CD8-positive, alpha-beta T cell (primary cell): ENCODE measurements at regions of chr11 and their contacts with region 1.

Region 1: DNA sequence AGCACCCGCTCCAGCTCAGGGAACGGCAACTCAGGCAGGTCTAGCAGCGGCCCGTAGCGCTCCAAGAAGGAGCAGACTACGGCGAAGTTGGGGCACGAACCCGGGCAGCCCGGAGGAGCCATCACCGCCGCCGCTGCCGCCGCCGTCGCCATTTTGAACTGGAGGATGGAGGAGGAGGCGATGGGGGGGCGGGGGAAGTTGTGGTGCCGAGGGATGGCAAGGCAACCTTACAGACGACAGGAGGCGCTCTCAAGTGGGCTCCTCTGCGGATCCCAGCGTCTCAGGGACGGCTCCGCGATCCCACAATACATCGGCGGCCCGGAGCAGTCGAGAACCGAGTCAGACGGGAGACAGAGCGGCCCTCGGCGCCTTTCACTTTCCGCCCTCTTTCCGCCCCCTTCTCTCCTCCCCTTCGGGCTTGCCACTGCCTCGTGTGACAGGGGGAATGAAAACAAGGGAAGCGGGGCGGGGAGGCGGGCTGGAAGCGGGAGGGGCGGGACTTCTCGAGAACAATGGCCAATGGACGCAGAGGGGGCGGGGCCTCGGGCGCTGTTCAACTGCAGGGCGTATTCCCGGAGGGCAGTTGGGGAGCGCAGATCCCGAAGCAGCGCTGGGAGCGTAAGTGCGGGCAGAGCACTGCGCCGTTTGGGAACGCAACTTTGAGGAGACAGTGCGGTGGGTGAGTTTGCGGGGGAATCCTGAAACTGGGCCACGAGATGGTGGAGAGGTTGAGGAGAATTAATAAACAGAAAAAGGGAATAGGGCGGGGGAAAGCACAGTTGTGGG is at the starts of genes AAMDC and RSF1:
- DNase-seq: peak; percentile 92 to 99 (median 97)
- ATAC-seq: peak; percentile 79
- H3K4me3 ChIP-seq: peak within 1 kb of the TSS; percentile 79 to 95
- H3K4me3 Mint-ChIP-seq: peak within 1 kb of the TSS; percentile 100
- H3K27ac ChIP-seq: peak within 1 kb of the TSS; percentile 83 to 91
- H3K27ac Mint-ChIP-seq: peak within 1 kb of the TSS; percentile 99
- H3K4me1 ChIP-seq: peaks cover 35% of the 10 kb centered on the region
- H3K4me1 Mint-ChIP-seq: peaks cover 38% of the 10 kb centered on the region
- H3K27me3 ChIP-seq: no peaks in the 10 kb centered on the region
- H3K27me3 Mint-ChIP-seq: no peaks in the 10 kb centered on the region
- CTCF ChIP-seq: peak; percentile 53
- total RNA-seq, gene AAMDC: 1.4 to 2.0 TPM
- total RNA-seq, gene RSF1: 96.7 to 103 TPM

Region 2: DNA sequence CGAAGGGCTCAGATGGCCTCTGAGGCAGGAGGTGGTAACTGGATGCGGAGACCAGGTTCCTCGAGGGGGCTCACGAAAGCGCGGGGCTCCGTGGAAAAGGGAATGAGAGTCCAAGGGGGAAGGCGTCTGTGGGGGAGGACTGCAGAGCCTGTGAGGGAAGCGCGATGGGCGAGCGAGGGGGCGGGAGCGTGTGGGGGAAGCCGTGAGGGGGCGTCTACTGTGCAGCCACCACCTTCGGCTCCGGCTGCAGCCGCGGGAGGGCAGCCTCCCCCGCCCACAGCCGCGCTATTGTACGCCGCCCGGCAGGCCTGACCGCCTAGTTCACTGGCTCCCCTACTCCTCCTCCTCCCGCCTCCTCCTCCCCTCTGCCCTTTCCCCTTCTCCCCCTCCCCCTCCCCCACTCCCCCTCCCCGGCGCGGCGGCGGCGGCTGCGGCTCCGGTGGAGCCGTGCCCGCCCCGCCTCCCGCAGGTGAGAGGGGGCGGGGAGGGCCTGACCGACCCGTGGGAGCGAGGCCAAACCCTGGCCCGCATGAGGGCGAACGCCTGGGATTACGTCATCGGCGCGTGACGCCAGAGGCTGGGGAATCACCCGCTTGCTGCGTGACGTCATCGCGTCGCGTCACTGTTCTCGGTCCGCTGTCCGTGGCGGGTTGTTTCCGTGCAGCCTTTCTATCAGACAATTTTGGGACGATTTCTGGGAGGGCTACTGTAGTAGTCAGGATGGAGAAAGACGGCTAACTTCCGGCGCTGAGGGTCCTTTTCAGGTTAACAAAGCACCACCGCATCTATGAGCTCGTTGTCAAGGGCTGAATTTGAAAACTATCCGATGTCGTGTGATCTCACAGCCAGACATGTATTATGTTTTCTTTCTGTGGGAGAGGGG is 346.7 kb before region 1 on chr11 and contains the start of gene PAK1:
- CTCF ChIA-PET with region 1: no interaction called
- POLR2A ChIA-PET with region 1: no interaction called
- intact Hi-C with region 1: loop called in 1 of 2 experiments (anchors 5 kb)
- DNase-seq: peak; percentile 63 to 99 (median 87)
- ATAC-seq: peak; percentile 73
- H3K4me3 ChIP-seq: peak within 1 kb of the TSS; percentile 56 to 58
- H3K4me3 Mint-ChIP-seq: peak within 1 kb of the TSS; percentile 88
- H3K27ac ChIP-seq: peak within 1 kb of the TSS; percentile 49 to 69
- H3K27ac Mint-ChIP-seq: peak within 1 kb of the TSS; percentile 97
- H3K4me1 ChIP-seq: peaks cover 11% of the 10 kb centered on the region
- H3K4me1 Mint-ChIP-seq: peaks cover 30% of the 10 kb centered on the region
- H3K27me3 ChIP-seq: no peaks in the 10 kb centered on the region
- H3K27me3 Mint-ChIP-seq: peaks cover 4% of the 10 kb centered on the region
- CTCF ChIP-seq: no peak
- total RNA-seq, gene PAK1: 16.9 to 18.7 TPM

Region 3: DNA sequence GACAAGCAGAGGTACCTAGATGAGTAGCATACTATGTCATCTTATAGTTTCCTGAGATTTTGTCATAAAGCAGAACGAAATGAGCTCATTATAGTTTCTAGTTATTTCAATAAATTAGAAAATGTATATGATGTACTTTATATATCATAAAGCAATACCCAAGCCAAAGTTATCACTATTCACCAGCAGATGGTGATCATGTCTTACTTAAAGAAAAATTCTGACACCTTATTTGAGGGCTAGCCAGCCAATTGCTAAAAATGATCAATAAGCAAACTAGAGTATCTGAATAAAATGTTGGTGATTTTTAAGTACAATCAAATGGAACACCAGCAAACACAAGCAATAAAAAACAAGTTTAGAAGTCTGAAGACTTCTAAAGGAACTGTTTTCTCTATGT is 44.3 kb before region 1 on chr11:
- CTCF ChIA-PET with region 1: no interaction called
- POLR2A ChIA-PET with region 1: no interaction called
- intact Hi-C with region 1: loop called (anchors 1 kb)
- DNase-seq: peak in 2 of 9 experiments; percentile 36 to 51
- ATAC-seq: peak; percentile 31
- H3K4me3 ChIP-seq: no peak overlapping the region
- H3K4me3 Mint-ChIP-seq: no peak overlapping the region
- H3K27ac ChIP-seq: no peak overlapping the region
- H3K27ac Mint-ChIP-seq: no peak overlapping the region
- H3K4me1 ChIP-seq: peaks cover 9% of the 10 kb centered on the region
- H3K4me1 Mint-ChIP-seq: peaks cover 62% of the 10 kb centered on the region
- H3K27me3 ChIP-seq: no peaks in the 10 kb centered on the region
- H3K27me3 Mint-ChIP-seq: no peaks in the 10 kb centered on the region
- CTCF ChIP-seq: peak; percentile 59

Region 4: DNA sequence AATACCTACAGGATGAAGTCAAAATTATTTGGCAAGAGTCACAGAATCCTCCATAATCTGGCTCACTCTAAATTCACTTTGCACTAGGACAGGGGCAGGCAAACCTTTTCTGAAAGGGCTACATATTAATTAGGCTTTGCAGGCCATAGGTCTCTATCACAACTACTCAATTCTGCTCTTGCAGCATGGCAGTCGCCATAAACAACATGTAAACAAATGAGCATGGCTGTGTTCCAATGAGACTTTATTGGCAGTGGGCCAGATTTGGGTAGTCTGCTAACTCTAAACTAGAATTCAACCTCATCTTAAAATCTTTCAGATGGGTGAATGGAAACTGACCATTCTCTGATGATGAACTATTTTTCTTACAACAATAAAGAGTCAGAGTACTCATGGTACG is 248.7 kb after region 1 on chr11:
- CTCF ChIA-PET with region 1: no interaction called
- POLR2A ChIA-PET with region 1: no interaction called
- intact Hi-C with region 1: no loop called
- DNase-seq: no peak
- ATAC-seq: no peak
- H3K4me3 ChIP-seq: no peak overlapping the region
- H3K4me3 Mint-ChIP-seq: no peak overlapping the region
- H3K27ac ChIP-seq: no peak overlapping the region
- H3K27ac Mint-ChIP-seq: no peak overlapping the region
- H3K4me1 ChIP-seq: no peaks in the 10 kb centered on the region
- H3K4me1 Mint-ChIP-seq: peaks cover 15% of the 10 kb centered on the region
- H3K27me3 ChIP-seq: no peaks in the 10 kb centered on the region
- H3K27me3 Mint-ChIP-seq: no peaks in the 10 kb centered on the region
- CTCF ChIP-seq: no peak

Region 5: GRCh38 chr11:78188286-78189173 is 367.8 kb after region 1 on chr11 and contains the starts of genes KCTD21 and USP35:
- CTCF ChIA-PET with region 1: no interaction called
- POLR2A ChIA-PET with region 1: no interaction called
- intact Hi-C with region 1: loop called in 1 of 2 experiments (anchors 5 kb)
- DNase-seq: peak; percentile 78 to 95 (median 91)
- ATAC-seq: peak; percentile 79
- H3K4me3 ChIP-seq: peak within 1 kb of the TSS; percentile 90 to 100
- H3K4me3 Mint-ChIP-seq: peak within 1 kb of the TSS; percentile 97
- H3K27ac ChIP-seq: peak within 1 kb of the TSS; percentile 73 to 75
- H3K27ac Mint-ChIP-seq: peak within 1 kb of the TSS; percentile 98
- H3K4me1 ChIP-seq: peaks cover 37% of the 10 kb centered on the region
- H3K4me1 Mint-ChIP-seq: peaks cover 55% of the 10 kb centered on the region
- H3K27me3 ChIP-seq: no peaks in the 10 kb centered on the region
- H3K27me3 Mint-ChIP-seq: no peaks in the 10 kb centered on the region
- CTCF ChIP-seq: no peak
- total RNA-seq, gene KCTD21: 3.0 to 3.4 TPM
- total RNA-seq, gene USP35: 22.3 to 23.4 TPM